ENCODE measurements at regions of chr2 and their contacts with region 1.

Region 1: DNA sequence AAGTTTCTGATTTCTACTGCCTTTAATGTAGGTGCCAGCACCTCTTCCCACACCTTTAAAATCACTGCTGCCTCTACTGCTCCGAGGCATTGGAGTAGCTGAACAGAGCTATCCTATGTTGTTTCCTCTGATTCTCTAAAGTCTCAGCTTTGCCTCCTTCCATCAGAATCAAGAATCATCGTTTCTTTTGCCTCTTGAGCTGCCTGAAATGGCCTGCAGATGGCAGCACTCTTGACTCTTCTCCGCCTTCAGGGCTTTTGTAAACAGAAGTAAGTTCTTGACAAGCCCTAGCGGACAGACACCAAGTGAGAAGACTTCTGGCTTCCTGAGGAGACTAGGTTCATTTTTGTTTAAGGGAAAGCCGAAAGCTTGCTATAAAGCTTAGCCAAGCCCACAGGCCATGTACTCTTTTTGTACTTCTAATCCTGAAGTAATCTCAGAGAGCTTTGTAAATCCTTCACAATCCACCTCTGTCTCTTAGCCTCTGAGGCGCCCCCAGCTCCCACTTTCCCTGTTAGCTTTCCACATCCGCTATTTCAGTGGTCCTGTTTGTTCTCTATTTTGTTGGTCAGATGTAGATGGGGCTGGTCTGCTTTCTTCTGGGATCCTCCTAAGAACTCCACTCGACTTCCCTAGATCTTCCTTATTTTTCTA is 48.4 kb downstream of the GTF3C3 start:
- DNase-seq: peak; percentile 4
- H3K4me3 ChIP-seq: no peak overlapping the region
- H3K27me3 ChIP-seq: no peaks in the 10 kb centered on the region
- CTCF ChIP-seq: peak; percentile 84

Region 2: GRCh38 chr2:196712867-196713266 is 38.2 kb before region 1 on chr2:
- CTCF ChIA-PET with region 1: no interaction called
- POLR2A ChIA-PET with region 1: no interaction called
- DNase-seq: no peak
- H3K4me3 ChIP-seq: no peak overlapping the region
- H3K27me3 ChIP-seq: no peaks in the 10 kb centered on the region
- CTCF ChIP-seq: no peak

Region 3: DNA sequence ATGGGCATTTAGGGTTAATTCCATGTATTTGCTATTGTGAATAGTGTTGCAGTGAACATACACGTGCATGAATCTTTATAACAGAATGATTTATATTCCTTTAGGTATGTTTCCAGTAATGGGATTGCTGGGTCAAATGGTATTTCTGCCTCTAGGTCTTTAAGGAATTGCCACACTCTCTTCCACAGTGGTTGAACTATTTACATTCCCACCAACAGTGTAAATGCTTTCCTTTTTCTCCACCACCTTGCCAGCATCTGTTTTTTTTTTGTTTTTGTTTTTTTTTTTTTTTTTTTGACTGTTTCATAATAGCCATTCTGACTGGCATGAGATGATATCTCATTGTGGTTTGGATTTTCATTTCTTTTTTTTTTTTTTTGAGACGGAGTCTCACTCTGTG is 14.1 kb before region 1 on chr2:
- CTCF ChIA-PET with region 1: interaction called, 13 read pairs
- POLR2A ChIA-PET with region 1: no interaction called
- DNase-seq: no peak
- H3K4me3 ChIP-seq: no peak overlapping the region
- H3K27me3 ChIP-seq: no peaks in the 10 kb centered on the region
- CTCF ChIP-seq: no peak

Region 4: DNA sequence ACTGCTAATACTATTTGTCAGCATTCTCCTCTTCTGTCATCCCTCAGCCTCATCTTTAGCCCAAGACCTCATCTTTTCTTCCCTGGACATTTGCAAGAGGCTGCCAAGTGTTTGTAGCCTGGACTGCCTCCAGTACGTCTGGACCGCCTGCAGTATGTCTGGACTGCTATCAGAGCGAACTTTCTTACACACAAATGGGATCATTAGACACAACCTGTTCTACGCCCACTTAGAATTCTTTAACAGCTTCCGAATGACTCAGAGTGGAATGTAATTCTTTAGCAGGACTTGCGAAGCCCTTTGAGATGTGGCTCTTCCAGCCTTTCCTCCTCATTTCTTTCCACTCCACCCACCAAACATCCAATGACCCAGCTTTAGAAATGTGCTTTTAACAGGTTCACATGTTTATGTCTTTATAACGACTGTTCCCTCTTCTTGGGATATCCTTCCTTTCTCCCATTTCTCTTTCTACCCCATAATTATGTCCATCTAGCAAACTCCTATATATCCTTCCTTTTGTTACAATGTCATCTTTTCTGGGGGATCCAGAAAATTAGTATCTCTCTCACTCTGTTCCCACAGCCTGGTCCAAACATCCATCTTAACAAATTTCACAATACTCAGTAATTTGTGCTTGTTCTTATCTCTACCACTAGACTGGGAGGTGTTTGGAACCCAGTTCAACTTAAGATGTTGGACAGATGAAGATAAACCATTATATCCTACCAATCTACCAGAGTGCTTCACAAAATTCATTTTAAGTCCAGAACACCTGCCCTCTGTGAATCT is 346.7 kb after region 1 on chr2:
- CTCF ChIA-PET with region 1: no interaction called
- POLR2A ChIA-PET with region 1: no interaction called
- DNase-seq: peak; percentile 54
- H3K4me3 ChIP-seq: no peak overlapping the region
- H3K27me3 ChIP-seq: no peaks in the 10 kb centered on the region
- CTCF ChIP-seq: no peak